Common myeloid progenitor, CD34-positive (primary cell): ENCODE measurements at regions of chr16 and their contacts with region 1.

Region 1: GRCh38 chr16:29805378-29806098 is 791 bp upstream of the MAZ start:
- DNase-seq: peak; percentile 98 to 100 (median 99)
- H3K4me3 ChIP-seq: peak overlapping the region; percentile 62 to 94 (median 79)
- H3K27ac ChIP-seq: peak overlapping the region; percentile 83 to 94
- H3K4me1 ChIP-seq: peaks cover 8 to 52% (median 42%) of the 10 kb centered on the region in 4 experiments
- H3K27me3 ChIP-seq: no peaks in the 10 kb centered on the region

Region 2: DNA sequence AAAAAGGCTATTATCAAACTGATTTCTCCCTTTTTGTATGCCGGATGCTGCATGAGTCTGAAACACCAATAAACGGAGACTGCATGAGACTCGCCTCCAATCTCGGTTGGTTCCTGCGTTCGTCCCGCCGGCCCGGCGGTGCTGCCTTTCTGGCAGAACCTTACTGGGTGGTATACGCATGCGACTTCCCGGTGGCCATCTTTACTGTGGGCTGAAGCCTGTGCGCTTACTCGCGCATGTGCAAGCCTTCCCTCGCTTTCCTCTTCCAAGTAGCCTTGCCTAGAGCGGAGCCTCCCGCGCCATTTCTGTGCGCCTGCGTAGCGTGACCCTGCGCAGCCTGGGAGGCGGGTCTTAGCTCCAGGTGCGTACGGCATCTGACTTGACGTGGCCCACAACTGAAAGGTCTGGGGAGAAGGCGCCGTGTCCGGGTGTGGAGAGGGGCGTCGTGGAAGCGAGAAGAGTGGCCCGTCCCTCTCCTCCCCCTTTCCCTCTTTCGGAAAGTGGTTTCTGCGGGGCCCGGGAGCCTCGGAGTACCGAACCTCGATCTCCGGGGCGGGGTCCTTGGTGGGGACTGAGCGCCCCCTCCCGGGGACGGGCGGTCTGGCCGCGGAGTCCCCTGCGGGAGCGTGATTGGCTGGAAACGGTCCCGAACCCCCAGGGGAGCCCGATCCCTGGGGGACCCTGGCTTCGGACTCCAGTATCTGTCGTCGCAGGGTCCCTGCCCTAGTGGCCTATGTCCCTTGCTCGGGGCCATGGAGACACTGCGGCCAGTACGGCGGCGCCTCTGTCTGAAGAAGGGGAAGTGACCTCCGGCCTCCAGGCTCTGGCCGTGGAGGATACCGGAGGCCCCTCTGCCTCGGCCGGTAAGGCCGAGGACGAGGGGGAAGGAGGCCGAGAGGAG is 10.5 kb after region 1 on chr16 and contains the start of gene PAGR1:
- CTCF ChIA-PET with region 1: interaction called, 13 read pairs
- POLR2A ChIA-PET with region 1: interaction called, 12 read pairs
- DNase-seq: peak; percentile 100
- H3K4me3 ChIP-seq: peak within 1 kb of the TSS; percentile 87 to 96 (median 90)
- H3K27ac ChIP-seq: peak within 1 kb of the TSS; percentile 33 to 75
- H3K4me1 ChIP-seq: peaks cover 7 to 70% (median 58%) of the 10 kb centered on the region in 4 experiments
- H3K27me3 ChIP-seq: peaks cover 0 to 20% (median 8%) of the 10 kb centered on the region in 5 experiments